ENCODE measurements at regions of chr5 and their contacts with region 1.

Region 1: DNA sequence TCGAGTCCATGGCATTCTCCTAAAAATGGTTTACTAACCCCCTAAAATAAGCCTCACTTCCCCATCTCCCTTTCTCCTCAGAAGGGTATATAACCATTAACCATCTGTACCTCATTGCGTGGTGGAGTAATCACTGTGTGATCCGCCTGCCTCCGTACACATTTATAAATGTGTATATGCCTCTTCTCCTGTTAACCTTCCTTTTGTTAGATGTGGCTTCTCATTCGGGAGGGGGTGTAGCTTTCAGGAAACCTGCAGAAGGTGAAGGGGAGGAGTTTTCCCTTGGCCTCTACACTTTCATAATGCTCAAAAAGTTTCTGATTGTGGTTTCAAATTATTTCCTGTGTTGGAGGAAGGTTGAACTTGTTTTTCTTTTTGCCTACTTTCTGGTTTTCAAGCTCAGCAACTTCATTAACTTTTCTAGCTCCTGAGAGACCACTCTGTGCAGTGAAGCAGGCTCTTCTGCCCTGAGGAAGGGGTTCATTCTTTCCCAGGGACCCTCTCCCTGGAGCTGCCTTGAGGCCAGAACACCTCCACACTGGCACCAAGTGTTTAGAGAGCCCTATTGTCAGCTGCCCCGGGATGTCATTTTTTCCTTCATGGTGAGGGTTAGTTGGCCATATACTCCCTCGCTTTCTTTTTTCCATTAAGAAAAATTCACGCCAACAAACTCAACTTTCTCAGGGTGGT is 46.9 kb downstream of the RASGRF2 start:
- DNase-seq: no peak
- ATAC-seq: no peak
- H3K4me3 ChIP-seq: no peak overlapping the region
- H3K27ac ChIP-seq: peak overlapping the region in 8 of 10 donors; percentile 23 to 80 (median 66)
- H3K4me1 ChIP-seq: peaks cover 0 to 44% (median 16%) of the 10 kb centered on the region in 9 donors
- H3K27me3 ChIP-seq: no peaks in the 10 kb centered on the region
- CTCF ChIP-seq: no peak

Region 2: GRCh38 chr5:80985600-80986228 is 21.4 kb before region 1 on chr5:
- intact Hi-C with region 1: loop called in 1 of 10 experiments (anchors 2 kb)
- DNase-seq: peak in 1 of 2 donors; percentile 53
- ATAC-seq: peak; percentile 57 to 94 (median 88)
- H3K4me3 ChIP-seq: peak overlapping the region in 8 of 10 donors; percentile 3 to 38 (median 22)
- H3K27ac ChIP-seq: peak overlapping the region in 9 of 10 donors; percentile 36 to 81 (median 65)
- H3K4me1 ChIP-seq: peaks cover 0 to 65% (median 13%) of the 10 kb centered on the region in 9 donors
- H3K27me3 ChIP-seq: no peaks in the 10 kb centered on the region
- CTCF ChIP-seq: no peak

Region 3: GRCh38 chr5:81068063-81068462 is 61.0 kb after region 1 on chr5:
- intact Hi-C with region 1: loop called in 1 of 10 experiments (anchors 5 kb)
- DNase-seq: peak in 1 of 2 donors; percentile 49
- ATAC-seq: peak in 7 of 8 donors; percentile 59 to 93 (median 87)
- H3K4me3 ChIP-seq: no peak overlapping the region
- H3K27ac ChIP-seq: peak overlapping the region in 9 of 10 donors; percentile 16 to 86 (median 71)
- H3K4me1 ChIP-seq: peaks cover 0 to 25% (median 0%) of the 10 kb centered on the region in 9 donors
- H3K27me3 ChIP-seq: no peaks in the 10 kb centered on the region
- CTCF ChIP-seq: no peak

Measured in heart right ventricle (tissue), 16 donors.